Transverse colon (tissue), 4 donors: ENCODE measurements at regions of chr7 and their contacts with region 1.

Region 1: GRCh38 chr7:140175221-140176121 is 1.3 kb downstream of the KDM7A start:
- DNase-seq: peak; percentile 92
- H3K4me3 ChIP-seq: peak overlapping the region; percentile 94 to 98 (median 96)
- H3K27ac ChIP-seq: peak overlapping the region; percentile 99 to 100 (median 100)
- H3K4me1 ChIP-seq: peaks cover 0 to 59% (median 34%) of the 10 kb centered on the region in 4 donors
- H3K27me3 ChIP-seq: no peaks in the 10 kb centered on the region
- CTCF ChIP-seq: peak; percentile 70 to 95 (median 73)
- EP300 ChIP-seq: peak; percentile 8
- POLR2A ChIP-seq: peak; percentile 94

Region 2: DNA sequence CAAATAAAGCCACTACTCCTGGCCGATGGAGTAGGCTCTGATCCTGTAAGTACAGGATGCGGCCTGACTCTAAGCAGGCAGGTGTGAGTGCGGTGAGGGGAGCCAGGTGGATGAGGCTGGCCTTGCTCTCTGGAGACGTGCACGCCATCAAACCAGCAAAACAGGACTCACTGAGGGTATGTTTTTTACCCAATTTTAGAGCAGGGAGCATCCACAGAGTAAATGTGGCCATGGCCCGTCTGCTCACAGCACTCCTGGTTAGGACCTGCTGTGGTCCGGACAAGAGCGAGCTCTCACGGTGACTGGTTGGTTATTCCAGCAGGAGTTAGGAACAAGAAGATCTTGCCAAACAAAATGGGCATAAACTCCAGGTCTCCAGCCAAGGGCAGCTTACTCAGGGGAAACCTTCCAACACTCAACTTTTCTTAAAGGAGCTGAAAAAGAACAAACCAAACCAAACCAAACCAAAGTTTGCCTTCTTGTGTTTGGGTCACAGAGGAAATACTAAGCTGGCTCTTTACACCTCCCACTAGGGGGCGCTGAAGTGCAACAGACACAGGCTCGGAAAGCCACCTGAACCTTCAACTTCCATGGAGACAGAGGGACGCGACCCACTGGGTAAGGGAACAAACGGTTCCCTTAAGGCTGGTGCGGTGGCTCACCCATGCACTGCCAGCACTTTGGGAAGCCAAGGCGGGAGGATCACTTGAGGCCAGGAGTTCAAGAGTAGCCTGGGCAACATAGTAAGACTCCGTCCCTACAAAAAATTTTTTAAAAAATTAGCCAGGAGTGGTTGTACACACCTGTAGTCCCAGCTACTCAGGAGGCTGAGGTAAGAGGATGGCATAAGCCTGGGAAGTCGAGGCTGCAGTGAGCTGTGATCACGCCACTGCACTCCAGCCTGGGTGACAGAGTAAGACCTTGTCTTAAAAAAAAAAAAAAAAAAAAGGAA is 529.6 kb before region 1 on chr7:
- in situ Hi-C with region 1: no loop called
- intact Hi-C with region 1: no loop called
- DNase-seq: peak; percentile 88
- H3K4me3 ChIP-seq: no peak overlapping the region
- H3K27ac ChIP-seq: no peak overlapping the region
- H3K4me1 ChIP-seq: peaks cover 0 to 27% (median 1%) of the 10 kb centered on the region in 4 donors
- H3K27me3 ChIP-seq: no peaks in the 10 kb centered on the region
- CTCF ChIP-seq: peak; percentile 87 to 94 (median 91)
- EP300 ChIP-seq: no peak
- POLR2A ChIP-seq: no peak

Region 3: GRCh38 chr7:140230861-140231770 is 55.6 kb after region 1 on chr7:
- in situ Hi-C with region 1: no loop called
- intact Hi-C with region 1: loop called (anchors 5 kb)
- DNase-seq: peak; percentile 87
- H3K4me3 ChIP-seq: peak overlapping the region; percentile 33 to 56 (median 48)
- H3K27ac ChIP-seq: peak overlapping the region; percentile 89 to 96 (median 90)
- H3K4me1 ChIP-seq: peaks cover 11 to 53% (median 45%) of the 10 kb centered on the region in 4 donors
- H3K27me3 ChIP-seq: no peaks in the 10 kb centered on the region
- CTCF ChIP-seq: no peak
- EP300 ChIP-seq: no peak
- POLR2A ChIP-seq: peak; percentile 52

Region 4: GRCh38 chr7:140857048-140857447 is 681.6 kb after region 1 on chr7:
- in situ Hi-C with region 1: no loop called
- intact Hi-C with region 1: no loop called
- DNase-seq: no peak
- H3K4me3 ChIP-seq: no peak overlapping the region
- H3K27ac ChIP-seq: no peak overlapping the region
- H3K4me1 ChIP-seq: peaks cover 0 to 14% (median 1%) of the 10 kb centered on the region in 4 donors
- H3K27me3 ChIP-seq: no peaks in the 10 kb centered on the region
- CTCF ChIP-seq: no peak
- EP300 ChIP-seq: no peak
- POLR2A ChIP-seq: no peak